HEK293T (cell line): ENCODE measurements at regions of chr19 and their contacts with region 1.

Region 1: GRCh38 chr19:36837906-36838783 is at the start of gene ZNF790:
- DNase-seq: peak; percentile 79

Region 2: GRCh38 chr19:36775748-36776147 is 62.4 kb before region 1 on chr19:
- CTCF ChIA-PET with region 1: no interaction called
- POLR2A ChIA-PET with region 1: no interaction called
- DNase-seq: no peak

Region 3: GRCh38 chr19:36850559-36851442 is 12.7 kb after region 1 on chr19 and contains the start of gene ZNF345:
- CTCF ChIA-PET with region 1: interaction called, 3 read pairs
- POLR2A ChIA-PET with region 1: interaction called, 75 read pairs
- DNase-seq: peak; percentile 88

Region 4: GRCh38 chr19:36891768-36892357 is 53.7 kb after region 1 on chr19:
- CTCF ChIA-PET with region 1: no interaction called
- POLR2A ChIA-PET with region 1: no interaction called
- DNase-seq: no peak